ENCODE measurements at regions of chr6 and their contacts with region 1.

Region 1: DNA sequence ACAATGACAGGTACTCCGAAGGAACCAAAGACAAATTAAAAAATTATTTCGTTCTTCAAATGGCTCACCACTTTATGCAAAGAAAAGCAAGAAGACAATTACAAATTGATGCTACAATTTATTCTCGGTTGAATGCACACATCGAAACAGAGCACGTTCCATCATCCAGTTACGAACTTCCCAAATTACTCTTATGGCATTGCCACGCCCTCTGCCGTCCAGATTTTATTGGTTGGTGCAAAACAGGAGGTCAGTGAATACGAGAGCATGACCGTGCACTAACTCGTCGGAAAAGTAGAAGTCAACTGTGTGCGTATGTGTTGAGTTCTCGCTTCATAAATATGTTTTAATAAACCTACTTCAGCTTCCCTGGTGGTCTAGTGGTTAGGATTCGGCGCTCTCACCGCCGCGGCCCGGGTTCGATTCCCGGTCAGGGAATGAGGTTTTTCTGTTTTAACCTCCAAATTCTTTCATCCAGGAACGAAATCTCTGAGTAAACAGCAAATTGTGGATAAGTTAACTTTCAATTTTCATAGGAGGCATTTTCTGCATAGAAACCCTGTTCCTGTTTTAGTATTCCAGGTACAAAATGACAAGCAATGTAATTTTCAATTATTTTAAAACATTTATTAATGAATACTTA is 23.2 kb downstream of the ZNF311 start:
- DNase-seq: peak; percentile 81 to 82
- H3K4me3 ChIP-seq: peak overlapping the region; percentile 74
- H3K4me3 Mint-ChIP-seq: peak overlapping the region; percentile 94
- H3K27ac Mint-ChIP-seq: peak overlapping the region; percentile 91
- H3K4me1 ChIP-seq: 0 out of 2 replicates have a peak, but pooled peaks cover 4% of the 10 kb centered on the region
- H3K4me1 Mint-ChIP-seq: peaks cover 29% of the 10 kb centered on the region
- H3K27me3 ChIP-seq: no peaks in the 10 kb centered on the region
- H3K27me3 Mint-ChIP-seq: peaks cover 4% of the 10 kb centered on the region
- CTCF ChIP-seq: no peak

Region 2: GRCh38 chr6:28789553-28790083 is 192.3 kb before region 1 on chr6:
- CTCF ChIA-PET with region 1: no interaction called
- POLR2A ChIA-PET with region 1: no interaction called
- intact Hi-C with region 1: loop called (anchors 5 kb)
- DNase-seq: peak; percentile 45 to 71
- H3K4me3 ChIP-seq: peak overlapping the region; percentile 34
- H3K4me3 Mint-ChIP-seq: peak overlapping the region; percentile 82
- H3K27ac Mint-ChIP-seq: peak overlapping the region; percentile 92
- H3K4me1 ChIP-seq: peaks cover 4% of the 10 kb centered on the region; the same call in 1 of the 2 replicates
- H3K4me1 Mint-ChIP-seq: peaks cover 27% of the 10 kb centered on the region
- H3K27me3 ChIP-seq: no peaks in the 10 kb centered on the region
- H3K27me3 Mint-ChIP-seq: peaks cover 3% of the 10 kb centered on the region
- CTCF ChIP-seq: no peak

Region 3: GRCh38 chr6:28863604-28864320 is 118.2 kb before region 1 on chr6:
- CTCF ChIA-PET with region 1: no interaction called
- POLR2A ChIA-PET with region 1: interaction called, 5 read pairs
- intact Hi-C with region 1: loop called (anchors 1 kb)
- DNase-seq: peak; percentile 85 to 87
- H3K4me3 ChIP-seq: peak overlapping the region; percentile 81
- H3K4me3 Mint-ChIP-seq: peak overlapping the region; percentile 79
- H3K27ac Mint-ChIP-seq: peak overlapping the region; percentile 96
- H3K4me1 ChIP-seq: peaks cover 11% of the 10 kb centered on the region
- H3K4me1 Mint-ChIP-seq: peaks cover 20% of the 10 kb centered on the region
- H3K27me3 ChIP-seq: no peaks in the 10 kb centered on the region
- H3K27me3 Mint-ChIP-seq: no peaks in the 10 kb centered on the region
- CTCF ChIP-seq: no peak

Region 4: DNA sequence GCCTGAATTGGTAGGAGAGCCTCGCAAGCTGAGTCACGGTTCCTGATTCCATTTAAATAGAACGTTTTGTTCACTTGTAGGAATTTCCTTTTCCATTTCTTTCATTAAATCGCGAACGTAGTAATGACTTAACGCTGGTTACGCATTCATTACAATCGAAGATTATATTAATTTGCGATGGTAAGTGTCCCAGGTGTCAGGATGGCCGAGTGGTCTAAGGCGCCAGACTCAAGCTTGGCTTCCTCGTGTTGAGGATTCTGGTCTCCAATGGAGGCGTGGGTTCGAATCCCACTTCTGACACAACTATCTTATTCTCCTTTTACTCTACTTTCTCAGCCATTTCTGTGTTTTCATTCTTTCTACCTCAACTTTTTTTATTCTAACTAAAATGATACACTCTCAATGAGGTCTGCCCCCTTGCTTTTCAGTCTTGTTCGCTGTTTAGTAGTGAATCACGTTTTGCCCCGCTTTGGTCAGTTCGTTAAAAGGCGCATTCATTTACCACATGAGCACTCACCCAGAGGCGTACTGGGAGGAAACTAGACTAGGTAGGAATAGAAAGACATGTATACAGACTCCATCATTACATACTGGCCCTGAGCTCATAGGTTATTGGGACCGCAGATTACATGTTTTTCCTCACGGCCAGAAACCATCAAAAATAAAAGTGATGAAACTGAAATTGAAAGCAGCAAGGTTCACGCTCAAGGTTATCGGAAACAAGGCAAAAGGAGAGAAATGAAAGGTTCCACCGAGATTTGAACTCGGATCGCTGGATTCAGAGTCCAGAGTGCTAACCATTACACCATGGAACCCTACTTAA is 40.9 kb before region 1 on chr6:
- CTCF ChIA-PET with region 1: no interaction called
- POLR2A ChIA-PET with region 1: no interaction called
- intact Hi-C with region 1: loop called (anchors 1 kb)
- DNase-seq: peak; percentile 79 to 80
- H3K4me3 ChIP-seq: peak overlapping the region; percentile 47
- H3K4me3 Mint-ChIP-seq: peak overlapping the region; percentile 96
- H3K27ac Mint-ChIP-seq: peak overlapping the region; percentile 93
- H3K4me1 ChIP-seq: peaks cover 7% of the 10 kb centered on the region; the same call in 1 of the 2 replicates
- H3K4me1 Mint-ChIP-seq: peaks cover 39% of the 10 kb centered on the region
- H3K27me3 ChIP-seq: no peaks in the 10 kb centered on the region
- H3K27me3 Mint-ChIP-seq: no peaks in the 10 kb centered on the region
- CTCF ChIP-seq: no peak

Region 5: DNA sequence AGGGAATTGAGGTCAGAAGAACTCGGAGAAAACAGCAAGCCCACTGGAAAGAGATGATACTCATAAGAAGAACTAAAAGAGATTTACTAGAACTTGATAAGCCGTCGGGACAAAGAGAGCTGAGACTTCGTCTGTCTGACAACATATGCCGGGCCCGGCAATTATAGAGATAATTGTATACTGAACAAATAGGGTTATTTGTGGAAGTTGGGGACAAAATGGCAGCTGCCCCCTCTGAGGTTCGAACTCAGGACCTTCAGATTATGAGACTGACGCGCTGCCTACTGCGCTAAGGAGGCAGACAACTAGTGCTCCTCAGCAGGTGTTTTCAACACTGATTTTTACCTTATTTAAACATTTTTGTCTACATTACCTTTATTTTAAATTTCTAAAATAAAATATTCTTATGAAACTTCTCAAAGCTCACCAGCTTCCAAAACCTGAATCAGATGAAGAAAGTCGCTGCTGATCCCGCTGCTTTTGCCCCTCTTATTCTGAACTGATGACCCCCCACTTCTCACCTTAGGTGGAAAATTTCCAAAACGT is 28.8 kb before region 1 on chr6:
- CTCF ChIA-PET with region 1: interaction called, 3 read pairs
- POLR2A ChIA-PET with region 1: no interaction called
- intact Hi-C with region 1: loop called (anchors 1 kb)
- DNase-seq: peak; percentile 65 to 69
- H3K4me3 ChIP-seq: peak overlapping the region; percentile 65
- H3K4me3 Mint-ChIP-seq: peak overlapping the region; percentile 85
- H3K27ac Mint-ChIP-seq: peak overlapping the region; percentile 84
- H3K4me1 ChIP-seq: peaks cover 18% of the 10 kb centered on the region
- H3K4me1 Mint-ChIP-seq: peaks cover 16% of the 10 kb centered on the region
- H3K27me3 ChIP-seq: no peaks in the 10 kb centered on the region
- H3K27me3 Mint-ChIP-seq: peaks cover 3% of the 10 kb centered on the region
- CTCF ChIP-seq: no peak

Region 6: DNA sequence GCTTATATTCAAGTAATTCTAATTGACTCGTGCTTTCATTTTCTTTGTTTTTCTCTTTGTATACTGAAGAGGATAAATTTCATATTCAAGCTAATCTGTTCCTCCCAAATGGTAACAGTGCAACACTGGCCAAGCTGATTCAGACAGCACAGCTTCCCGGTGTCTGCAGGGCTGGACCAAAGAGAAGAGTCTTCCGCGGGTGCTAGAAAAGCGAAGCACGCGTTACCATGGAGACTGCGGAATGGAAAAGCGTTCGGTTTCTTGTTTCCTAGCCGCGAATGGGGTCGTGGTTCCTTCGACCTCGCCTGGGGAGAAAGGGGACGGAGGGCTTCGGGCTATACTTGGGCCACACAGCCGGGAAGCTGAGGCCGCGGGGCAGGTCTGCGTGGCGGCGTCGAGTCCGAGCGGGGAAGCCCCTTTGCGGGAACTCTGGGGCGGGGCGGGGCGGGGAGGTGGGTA is 29.4 kb after region 1 on chr6:
- CTCF ChIA-PET with region 1: interaction called, 14 read pairs
- POLR2A ChIA-PET with region 1: interaction called, 9 read pairs
- intact Hi-C with region 1: loop called (anchors 1 kb)
- DNase-seq: no peak
- H3K4me3 ChIP-seq: no peak overlapping the region
- H3K4me3 Mint-ChIP-seq: peak overlapping the region; percentile 52
- H3K27ac Mint-ChIP-seq: no peak overlapping the region
- H3K4me1 ChIP-seq: peaks cover 7% of the 10 kb centered on the region
- H3K4me1 Mint-ChIP-seq: peaks cover 9% of the 10 kb centered on the region
- H3K27me3 ChIP-seq: no peaks in the 10 kb centered on the region
- H3K27me3 Mint-ChIP-seq: no peaks in the 10 kb centered on the region
- CTCF ChIP-seq: no peak

Region 7: GRCh38 chr6:29025927-29026585 is 44.1 kb after region 1 on chr6:
- CTCF ChIA-PET with region 1: no interaction called
- POLR2A ChIA-PET with region 1: no interaction called
- intact Hi-C with region 1: no loop called
- DNase-seq: no peak
- H3K4me3 ChIP-seq: no peak overlapping the region
- H3K4me3 Mint-ChIP-seq: no peak overlapping the region
- H3K27ac Mint-ChIP-seq: no peak overlapping the region
- H3K4me1 ChIP-seq: no peaks in the 10 kb centered on the region
- H3K4me1 Mint-ChIP-seq: no peaks in the 10 kb centered on the region
- H3K27me3 ChIP-seq: no peaks in the 10 kb centered on the region
- H3K27me3 Mint-ChIP-seq: peaks cover 13% of the 10 kb centered on the region
- CTCF ChIP-seq: no peak